Aorta (tissue), 5 donors: ENCODE measurements at regions of chr7 and their contacts with region 1.

Region 1: DNA sequence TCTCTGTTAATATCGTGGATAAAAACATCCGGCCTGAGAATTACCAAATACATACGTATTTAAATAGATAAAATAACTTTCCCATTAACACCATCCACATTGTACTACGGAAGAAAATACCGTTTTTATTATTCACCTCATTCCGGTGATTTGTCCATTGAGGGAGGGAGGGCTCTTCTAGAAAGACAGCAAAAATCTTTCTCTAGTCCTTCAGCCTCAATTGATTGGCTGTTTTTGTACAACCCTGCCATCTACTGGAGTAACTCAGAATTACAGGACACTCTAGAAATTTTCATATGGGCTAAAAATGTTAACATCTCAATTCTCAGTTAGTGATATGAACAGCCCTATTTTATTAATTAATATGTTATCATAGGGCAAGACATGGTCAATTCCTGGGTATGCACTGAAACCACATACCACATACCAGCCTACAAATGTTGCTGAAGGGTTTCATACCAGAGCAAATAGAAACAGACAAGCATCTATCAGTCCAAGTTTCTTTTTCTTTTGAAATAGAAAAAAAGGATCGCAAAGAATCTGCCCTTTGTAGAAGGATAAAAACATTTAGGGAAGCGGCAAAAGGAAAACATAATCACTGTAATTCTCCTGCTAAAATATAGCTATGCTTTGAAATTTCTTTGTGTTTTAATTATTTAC is 55.8 kb upstream of the CDCA7L start:
- DNase-seq: no peak
- ATAC-seq: peak; percentile 63
- H3K4me3 ChIP-seq: no peak overlapping the region
- H3K27ac ChIP-seq: no peak overlapping the region
- H3K4me1 ChIP-seq: no peaks in the 10 kb centered on the region
- H3K27me3 ChIP-seq: no peaks in the 10 kb centered on the region

Region 2: GRCh38 chr7:21253740-21254687 is 747.5 kb before region 1 on chr7:
- intact Hi-C with region 1: loop called in 1 of 2 experiments (anchors 10 kb)
- DNase-seq: no peak
- ATAC-seq: no peak
- H3K4me3 ChIP-seq: peak overlapping the region in 1 of 2 donors; percentile 48
- H3K27ac ChIP-seq: no peak overlapping the region
- H3K4me1 ChIP-seq: no peaks in the 10 kb centered on the region
- H3K27me3 ChIP-seq: peaks cover 0 to 2% of the 10 kb centered on the region in 2 donors